ENCODE measurements at regions of chrX and their contacts with region 1.

Region 1: GRCh38 chrX:71532753-71533425 is at the start of gene OGT:
- DNase-seq: peak; percentile 96
- H3K4me3 Mint-ChIP-seq: peak within 1 kb of the TSS; percentile 96
- H3K27ac Mint-ChIP-seq: peak within 1 kb of the TSS; percentile 98
- H3K4me1 Mint-ChIP-seq: peaks cover 30% of the 10 kb centered on the region
- H3K27me3 Mint-ChIP-seq: no peaks in the 10 kb centered on the region
- total RNA-seq, gene OGT: 307 to 323 TPM

Region 2: DNA sequence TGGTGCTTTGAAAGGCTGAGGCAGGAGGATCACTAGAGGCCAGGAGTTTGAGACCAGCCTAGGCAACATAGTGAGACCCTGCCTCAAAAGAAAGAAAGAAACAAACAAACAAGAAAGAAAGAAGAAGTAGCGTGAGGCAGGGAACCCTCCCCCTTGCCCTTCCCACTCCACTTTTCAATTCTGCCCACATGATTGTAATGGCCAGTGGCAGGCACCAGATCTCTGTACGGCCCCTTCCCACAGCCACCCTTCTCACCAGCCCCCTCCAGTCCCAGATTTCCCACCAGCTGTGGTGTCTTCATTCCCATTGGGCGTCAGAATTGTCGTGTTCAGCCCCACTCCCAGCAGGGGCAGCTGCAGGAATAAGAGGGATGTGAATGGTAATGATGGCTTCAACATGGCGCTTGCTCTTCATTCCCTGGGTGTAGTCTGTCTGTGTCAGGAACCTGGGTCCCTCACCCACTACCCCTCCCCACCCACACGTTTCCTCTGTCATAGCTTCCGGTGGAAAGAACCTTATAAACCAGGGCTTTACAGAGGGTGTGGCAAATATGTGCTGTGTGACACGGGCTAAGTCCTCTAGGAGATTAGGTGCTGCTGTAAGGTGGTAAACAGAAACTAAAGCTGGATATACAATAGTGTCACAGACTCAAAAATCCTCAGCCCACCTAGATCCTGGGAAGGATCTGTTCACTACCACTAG is 421.6 kb before region 1 on chrX and contains the start of gene IL2RG:
- CTCF ChIA-PET with region 1: no interaction called
- intact Hi-C with region 1: loop called (anchors 1 kb)
- DNase-seq: peak; percentile 87
- H3K4me3 Mint-ChIP-seq: peak within 1 kb of the TSS; percentile 93
- H3K27ac Mint-ChIP-seq: peak within 1 kb of the TSS; percentile 95
- H3K4me1 Mint-ChIP-seq: peaks cover 37% of the 10 kb centered on the region
- H3K27me3 Mint-ChIP-seq: no peaks in the 10 kb centered on the region
- total RNA-seq, gene IL2RG: 144 to 148 TPM

Region 3: DNA sequence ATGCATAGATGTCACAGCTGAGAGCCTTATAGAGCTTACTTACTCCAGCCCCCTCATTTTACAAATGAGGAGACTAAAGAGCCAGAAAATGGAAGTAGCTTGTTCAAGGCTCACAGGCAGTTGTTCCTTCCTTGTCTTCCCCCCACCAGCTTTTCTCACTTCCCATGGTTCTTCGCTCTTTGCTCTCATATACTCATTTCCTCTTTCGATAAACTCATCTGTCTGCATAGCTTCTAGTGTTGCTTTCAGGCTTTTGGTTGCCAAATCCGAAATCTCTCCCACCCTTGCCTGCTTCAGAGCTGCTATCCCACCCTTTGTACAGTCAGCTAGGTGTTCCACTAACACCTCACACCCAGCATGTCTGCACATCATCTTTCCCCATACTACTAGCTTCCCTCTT is 334.8 kb before region 1 on chrX:
- CTCF ChIA-PET with region 1: no interaction called
- intact Hi-C with region 1: loop called (anchors 5 kb)
- DNase-seq: peak; percentile 45
- H3K4me3 Mint-ChIP-seq: peak overlapping the region; percentile 91
- H3K27ac Mint-ChIP-seq: peak overlapping the region; percentile 93
- H3K4me1 Mint-ChIP-seq: peaks cover 7% of the 10 kb centered on the region
- H3K27me3 Mint-ChIP-seq: no peaks in the 10 kb centered on the region

Region 4: GRCh38 chrX:71454222-71454621 is 78.7 kb before region 1 on chrX:
- CTCF ChIA-PET with region 1: no interaction called
- intact Hi-C with region 1: no loop called
- DNase-seq: no peak
- H3K4me3 Mint-ChIP-seq: no peak overlapping the region
- H3K27ac Mint-ChIP-seq: no peak overlapping the region
- H3K4me1 Mint-ChIP-seq: no peaks in the 10 kb centered on the region
- H3K27me3 Mint-ChIP-seq: no peaks in the 10 kb centered on the region

Region 5: DNA sequence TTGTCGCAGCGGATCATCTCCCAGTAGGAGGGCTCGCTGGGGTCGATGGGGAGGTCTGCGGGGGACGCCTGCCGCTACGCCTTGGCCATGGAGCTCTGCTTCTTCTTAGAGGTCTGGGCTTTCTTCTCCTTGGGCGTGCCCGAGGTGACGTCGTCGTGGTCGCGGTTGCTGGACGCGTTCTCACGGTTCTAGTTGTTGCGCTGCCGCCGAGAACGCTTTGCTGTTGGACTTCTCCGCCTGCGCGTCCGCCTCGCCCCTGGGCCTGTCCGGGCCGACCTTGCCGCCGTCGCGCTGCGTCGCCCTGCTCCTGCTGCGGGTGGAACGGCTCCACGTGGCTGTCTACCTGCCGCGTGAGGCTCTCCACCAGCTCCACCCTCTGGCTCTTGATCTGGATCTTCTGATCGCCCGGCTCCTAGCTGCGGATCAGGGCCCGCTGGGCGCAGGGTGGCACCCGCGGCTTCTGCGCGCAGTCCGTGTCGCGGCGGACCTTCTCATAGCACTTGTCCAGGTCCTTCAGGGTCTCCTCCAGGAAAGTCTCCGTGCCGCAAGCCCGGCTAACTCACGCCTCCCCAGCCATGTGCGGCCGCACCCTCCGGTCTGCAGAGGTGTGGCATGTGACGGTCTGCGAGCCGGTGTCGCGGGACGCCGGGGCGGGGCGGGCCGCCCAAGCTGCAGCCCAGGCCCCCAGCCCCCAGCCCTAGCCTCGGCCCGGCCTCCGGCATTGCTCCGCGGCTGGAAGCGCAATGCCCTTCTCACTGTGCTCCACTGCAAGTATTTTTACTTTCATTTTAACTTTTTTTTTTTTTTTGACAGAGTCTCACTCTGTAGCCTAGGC is 40.4 kb before region 1 on chrX:
- CTCF ChIA-PET with region 1: no interaction called
- intact Hi-C with region 1: loop called (anchors 2 kb)
- DNase-seq: peak; percentile 41
- H3K4me3 Mint-ChIP-seq: peak overlapping the region; percentile 75
- H3K27ac Mint-ChIP-seq: no peak overlapping the region
- H3K4me1 Mint-ChIP-seq: peaks cover 18% of the 10 kb centered on the region
- H3K27me3 Mint-ChIP-seq: no peaks in the 10 kb centered on the region

Region 6: GRCh38 chrX:71514367-71515038 is 18.4 kb before region 1 on chrX:
- CTCF ChIA-PET with region 1: interaction called, 3 read pairs
- intact Hi-C with region 1: loop called (anchors 1 kb)
- DNase-seq: peak; percentile 55
- H3K4me3 Mint-ChIP-seq: no peak overlapping the region
- H3K27ac Mint-ChIP-seq: peak overlapping the region; percentile 15
- H3K4me1 Mint-ChIP-seq: peaks cover 17% of the 10 kb centered on the region
- H3K27me3 Mint-ChIP-seq: no peaks in the 10 kb centered on the region

Region 7: DNA sequence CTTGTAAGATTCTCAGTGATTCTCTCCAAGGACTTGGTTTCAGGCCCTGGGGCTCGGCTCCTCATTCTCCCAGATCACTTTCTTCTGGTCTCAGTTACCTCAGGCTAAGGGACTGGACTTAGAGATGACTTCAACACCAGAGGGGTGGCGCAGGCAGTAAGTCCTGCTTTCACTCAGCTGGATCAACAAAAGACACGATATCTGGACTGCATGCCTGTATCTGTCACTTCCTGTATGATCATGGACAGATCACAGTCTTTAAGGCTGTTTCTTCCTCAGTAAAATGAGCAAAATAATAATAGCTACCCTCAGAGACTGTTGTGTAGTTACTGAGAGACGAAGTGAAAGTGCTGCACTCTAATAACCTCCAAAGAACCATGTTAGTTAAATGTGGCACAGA is 105.0 kb after region 1 on chrX:
- CTCF ChIA-PET with region 1: interaction called, 3 read pairs
- intact Hi-C with region 1: loop called (anchors 5 kb)
- DNase-seq: no peak
- H3K4me3 Mint-ChIP-seq: no peak overlapping the region
- H3K27ac Mint-ChIP-seq: no peak overlapping the region
- H3K4me1 Mint-ChIP-seq: peaks cover 17% of the 10 kb centered on the region
- H3K27me3 Mint-ChIP-seq: no peaks in the 10 kb centered on the region

Measured in activated naive CD4-positive, alpha-beta T cell treated with anti-CD3 and anti-CD28 coated beads for 36 hours (primary cell).